ENCODE measurements at regions of chr2 and their contacts with region 1.

Region 1: DNA sequence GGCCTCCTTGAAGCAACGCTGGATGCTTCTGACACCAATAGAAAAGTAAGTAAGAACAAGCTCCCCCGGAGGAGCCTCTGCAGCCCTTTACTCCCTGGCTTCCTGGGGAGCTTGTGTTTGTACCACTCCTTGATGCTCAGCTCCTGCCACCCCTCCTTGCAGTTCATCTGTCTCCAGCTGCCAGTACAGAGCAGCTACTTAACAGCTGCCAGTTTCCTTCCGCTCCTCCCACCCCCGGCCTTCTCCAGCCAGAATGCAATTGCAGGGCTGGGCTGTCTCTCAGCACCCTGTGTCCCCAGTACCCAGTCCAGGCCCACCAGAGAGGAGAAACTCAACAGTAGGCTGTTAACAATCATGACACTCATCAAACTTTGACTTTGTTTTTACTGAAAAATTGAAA is 109.4 kb downstream of the AOX1 start:
- DNase-seq: no peak
- ATAC-seq: peak in 2 of 4 donors; percentile 46
- H3K4me3 ChIP-seq: no peak overlapping the region
- H3K27ac ChIP-seq: no peak overlapping the region
- H3K4me1 ChIP-seq: no peaks in the 10 kb centered on the region
- H3K27me3 ChIP-seq: no peaks in the 10 kb centered on the region
- CTCF ChIP-seq: no peak

Region 2: GRCh38 chr2:200533754-200534153 is 161.4 kb before region 1 on chr2:
- intact Hi-C with region 1: no loop called
- DNase-seq: no peak
- ATAC-seq: no peak
- H3K4me3 ChIP-seq: no peak overlapping the region
- H3K27ac ChIP-seq: no peak overlapping the region
- H3K4me1 ChIP-seq: no peaks in the 10 kb centered on the region
- H3K27me3 ChIP-seq: no peaks in the 10 kb centered on the region
- CTCF ChIP-seq: no peak

Region 3: GRCh38 chr2:200578778-200579177 is 116.4 kb before region 1 on chr2:
- intact Hi-C with region 1: loop called in 2 of 3 experiments (anchors 5 to 10 kb)
- DNase-seq: no peak
- ATAC-seq: peak; percentile 78 to 97 (median 94)
- H3K4me3 ChIP-seq: no peak overlapping the region
- H3K27ac ChIP-seq: no peak overlapping the region
- H3K4me1 ChIP-seq: no peaks in the 10 kb centered on the region
- H3K27me3 ChIP-seq: no peaks in the 10 kb centered on the region
- CTCF ChIP-seq: peak; percentile 25 to 60 (median 40)

Measured in pancreas (tissue), 10 donors.